K562 (cell line): ENCODE measurements at regions of chr4 and their contacts with region 1.

Region 1: GRCh38 chr4:173505924-173506518 is 24.0 kb downstream of the HAND2 start:
- DNase-seq: peak; percentile 44 to 78 (median 58)
- ATAC-seq: peak; percentile 98
- H3K4me3 ChIP-seq: no peak overlapping the region
- H3K27ac ChIP-seq: no peak overlapping the region
- H3K4me1 ChIP-seq: peaks cover 0 to 11% of the 10 kb centered on the region in 2 experiments; a peak in 2 of 5 replicates
- H3K27me3 ChIP-seq: no peaks in the 10 kb centered on the region; a peak in 1 of 5 replicates
- CTCF ChIP-seq: peak; percentile 77 to 83 (median 82)
- EP300 ChIP-seq: no peak
- POLR2A ChIP-seq: no peak
- RAD21 ChIP-seq: peak; percentile 70 to 79

Region 2: GRCh38 chr4:173218411-173219125 is 287.5 kb before region 1 on chr4:
- CTCF ChIA-PET with region 1: no interaction called
- POLR2A ChIA-PET with region 1: no interaction called
- in situ Hi-C with region 1: no loop called
- intact Hi-C with region 1: no loop called
- DNase-seq: peak; percentile 59 to 88 (median 69)
- ATAC-seq: peak; percentile 88
- H3K4me3 ChIP-seq: peak overlapping the region; percentile 7; the same call in 1 of the 2 replicates
- H3K27ac ChIP-seq: peak overlapping the region; percentile 84
- H3K4me1 ChIP-seq: peaks cover 11 to 40% of the 10 kb centered on the region in 2 experiments
- H3K27me3 ChIP-seq: no peaks in the 10 kb centered on the region
- CTCF ChIP-seq: no peak; a peak in 1 of 6 replicates
- EP300 ChIP-seq: peak; percentile 92
- POLR2A ChIP-seq: no peak
- RAD21 ChIP-seq: no peak

Region 3: DNA sequence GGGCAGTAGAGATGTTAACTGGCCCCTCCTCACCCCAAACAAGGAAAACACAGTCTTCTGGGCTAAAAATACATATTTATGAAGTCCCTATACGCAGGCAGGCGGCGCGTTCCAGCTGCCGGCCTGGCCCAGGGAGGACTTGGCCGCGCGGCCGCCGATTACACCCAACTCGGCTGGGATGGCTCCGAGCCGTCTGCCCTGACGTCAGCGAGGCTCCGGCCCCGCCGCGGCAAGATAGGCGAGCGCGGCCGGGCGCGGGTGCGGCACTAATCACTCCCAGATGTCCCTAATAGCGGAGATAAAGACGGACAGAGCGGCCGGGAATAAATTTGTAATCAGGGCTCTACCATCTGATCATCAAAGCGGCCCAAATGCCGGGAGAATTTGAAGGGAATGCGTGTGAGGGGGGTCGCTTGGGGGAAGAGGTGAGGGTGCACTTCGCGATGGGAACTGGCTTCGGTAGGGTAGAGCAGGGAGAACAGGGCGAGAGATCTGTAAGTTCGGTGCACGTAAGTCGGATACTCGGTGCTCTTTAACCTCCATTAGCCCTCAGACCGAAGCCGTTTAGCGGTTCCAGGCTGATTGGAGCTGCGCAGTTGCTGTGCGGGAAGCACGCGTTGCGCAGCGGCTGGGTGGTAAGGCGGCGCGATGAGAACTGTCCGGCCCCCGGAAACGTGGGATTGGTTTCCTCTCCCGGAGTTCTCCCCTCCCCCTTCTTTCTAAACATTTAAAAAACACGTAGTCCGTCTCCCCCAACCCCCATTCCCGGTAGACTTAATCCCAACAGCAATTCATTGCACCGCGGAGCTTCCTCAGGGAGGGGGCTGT is 16.3 kb after region 1 on chr4:
- CTCF ChIA-PET with region 1: no interaction called
- POLR2A ChIA-PET with region 1: no interaction called
- in situ Hi-C with region 1: no loop called
- intact Hi-C with region 1: no loop called
- DNase-seq: peak; percentile 45 to 71 (median 58)
- ATAC-seq: peak; percentile 75
- H3K4me3 ChIP-seq: peak overlapping the region; percentile 21
- H3K27ac ChIP-seq: peak overlapping the region; percentile 76
- H3K4me1 ChIP-seq: peaks cover 0 to 34% of the 10 kb centered on the region in 2 experiments; a peak in 4 of 5 replicates
- H3K27me3 ChIP-seq: no peaks in the 10 kb centered on the region; a peak in 1 of 5 replicates
- CTCF ChIP-seq: no peak
- EP300 ChIP-seq: no peak
- POLR2A ChIP-seq: peak; percentile 32; the same call in 1 of the 2 replicates
- RAD21 ChIP-seq: no peak

Region 4: DNA sequence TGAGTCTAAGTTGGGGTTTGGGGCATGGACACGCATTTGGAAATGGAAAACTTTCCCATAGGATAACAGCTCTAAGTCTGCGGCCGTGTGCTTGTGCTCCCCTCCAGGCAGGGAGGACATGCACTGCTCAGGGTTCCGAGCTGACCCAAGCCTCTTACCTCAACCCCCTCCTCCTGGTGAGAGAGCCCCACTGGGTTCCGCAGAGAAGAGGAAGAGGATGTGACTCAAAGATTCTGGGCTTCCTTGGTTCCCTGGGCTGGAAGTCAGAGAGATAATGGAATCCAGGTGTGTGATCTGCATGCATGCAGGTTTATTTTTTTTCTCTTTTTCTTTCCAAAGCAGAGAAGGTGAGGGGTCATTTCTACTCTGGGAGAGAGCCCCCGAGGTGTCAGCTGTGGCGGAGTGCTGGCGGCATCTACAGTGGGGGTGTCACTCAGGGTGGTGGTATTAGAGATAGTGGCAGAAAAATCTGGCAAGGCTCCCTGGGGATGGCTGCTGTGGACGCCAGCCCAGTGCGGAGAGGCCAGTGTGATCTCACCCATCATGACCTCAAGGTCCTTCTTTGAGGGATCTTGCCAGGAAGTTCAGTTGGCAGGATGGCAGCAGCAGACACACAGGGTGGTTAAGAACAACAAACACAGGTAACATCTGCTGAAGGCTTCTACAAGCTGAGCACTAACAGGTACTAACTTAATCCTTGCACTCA is 192.7 kb after region 1 on chr4:
- CTCF ChIA-PET with region 1: no interaction called
- POLR2A ChIA-PET with region 1: no interaction called
- in situ Hi-C with region 1: no loop called
- intact Hi-C with region 1: no loop called
- DNase-seq: no peak
- ATAC-seq: no peak
- H3K4me3 ChIP-seq: no peak overlapping the region
- H3K27ac ChIP-seq: no peak overlapping the region
- H3K4me1 ChIP-seq: no peaks in the 10 kb centered on the region; a peak in 1 of 5 replicates
- H3K27me3 ChIP-seq: no peaks in the 10 kb centered on the region
- CTCF ChIP-seq: no peak
- EP300 ChIP-seq: no peak
- POLR2A ChIP-seq: no peak
- RAD21 ChIP-seq: no peak

Region 5: DNA sequence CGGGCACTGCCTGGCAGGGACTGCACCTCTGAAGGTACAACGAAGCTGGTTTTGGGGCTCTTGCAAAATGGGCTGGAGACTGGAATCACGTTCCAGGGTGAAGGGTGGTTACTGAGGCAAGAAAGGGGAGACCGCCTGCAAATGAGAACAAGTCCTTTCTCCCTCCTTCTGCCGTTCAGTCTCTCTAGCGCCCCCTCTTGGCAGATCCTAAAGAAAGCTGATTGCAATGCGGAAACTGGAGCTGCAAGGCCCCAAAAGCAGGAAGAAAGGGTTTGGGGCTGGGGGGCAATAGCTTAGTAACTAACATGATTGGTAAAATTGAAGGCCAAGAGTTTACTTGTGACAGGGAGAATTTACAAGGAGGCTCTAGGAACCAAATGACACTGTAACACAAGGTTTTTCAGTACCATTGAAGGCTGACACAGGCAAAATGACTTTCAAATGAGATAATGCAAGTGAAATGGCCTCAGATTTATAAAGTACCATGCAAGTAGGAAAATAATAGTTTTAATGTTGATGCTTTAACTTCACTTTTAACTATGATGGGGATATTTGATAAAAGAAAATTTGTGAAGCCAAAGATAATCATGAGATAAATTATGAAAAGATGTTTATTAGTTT is 246.7 kb after region 1 on chr4:
- CTCF ChIA-PET with region 1: interaction called, 5 read pairs
- POLR2A ChIA-PET with region 1: no interaction called
- in situ Hi-C with region 1: no loop called
- intact Hi-C with region 1: loop called (anchors 1 kb)
- DNase-seq: peak; percentile 40 to 74 (median 57)
- ATAC-seq: peak; percentile 84
- H3K4me3 ChIP-seq: no peak overlapping the region
- H3K27ac ChIP-seq: no peak overlapping the region
- H3K4me1 ChIP-seq: no peaks in the 10 kb centered on the region
- H3K27me3 ChIP-seq: no peaks in the 10 kb centered on the region
- CTCF ChIP-seq: peak; percentile 66 to 78 (median 72)
- EP300 ChIP-seq: no peak
- POLR2A ChIP-seq: no peak
- RAD21 ChIP-seq: peak in 1 of 2 experiments; percentile 44; a peak in 2 of 4 replicates

Region 6: GRCh38 chr4:173827707-173828106 is 321.7 kb after region 1 on chr4:
- CTCF ChIA-PET with region 1: no interaction called
- POLR2A ChIA-PET with region 1: no interaction called
- in situ Hi-C with region 1: no loop called
- intact Hi-C with region 1: loop called (anchors 10 kb)
- DNase-seq: no peak
- ATAC-seq: no peak
- H3K4me3 ChIP-seq: no peak overlapping the region
- H3K27ac ChIP-seq: no peak overlapping the region
- H3K4me1 ChIP-seq: no peaks in the 10 kb centered on the region
- H3K27me3 ChIP-seq: no peaks in the 10 kb centered on the region
- CTCF ChIP-seq: no peak
- EP300 ChIP-seq: no peak
- POLR2A ChIP-seq: no peak
- RAD21 ChIP-seq: no peak

Region 7: DNA sequence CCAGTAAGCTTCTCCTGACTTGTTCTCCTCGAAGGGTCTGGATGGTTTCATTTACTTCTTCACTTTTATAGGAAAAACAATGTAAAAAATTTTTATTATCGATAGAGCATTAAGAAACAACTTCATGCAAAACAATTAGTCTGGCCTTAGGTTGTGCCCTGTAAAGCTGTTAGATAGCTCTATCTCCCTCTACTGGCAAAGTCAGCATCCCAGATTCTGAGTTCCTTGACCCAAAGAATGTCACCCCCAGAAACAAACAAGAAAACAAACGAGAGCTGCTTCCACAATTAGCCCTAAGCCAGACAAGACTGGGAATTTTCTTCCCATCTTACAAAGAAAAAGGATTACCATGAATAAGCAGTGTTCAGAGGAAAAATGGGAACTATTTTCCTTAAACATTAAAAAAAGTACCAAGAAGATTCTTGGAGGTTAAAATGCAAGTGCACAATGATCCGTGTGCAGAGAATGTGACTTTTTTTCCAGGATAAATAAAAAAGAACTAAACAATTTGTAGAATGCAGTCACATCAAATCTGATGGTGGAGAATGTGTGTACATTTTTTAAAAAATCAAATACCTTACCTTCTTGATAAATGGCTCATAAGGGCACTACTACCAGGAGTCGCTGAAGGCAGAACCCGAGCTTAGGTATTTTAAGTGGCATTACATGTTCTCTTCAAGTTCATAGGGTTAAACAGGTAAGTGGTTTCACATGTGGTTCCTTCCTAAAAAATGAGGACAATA is 484.3 kb after region 1 on chr4:
- CTCF ChIA-PET with region 1: no interaction called
- POLR2A ChIA-PET with region 1: no interaction called
- in situ Hi-C with region 1: loop called (anchors 25 kb)
- intact Hi-C with region 1: loop called (anchors 1 kb)
- DNase-seq: peak in 2 of 4 experiments; percentile 15 to 41
- ATAC-seq: peak; percentile 88
- H3K4me3 ChIP-seq: no peak overlapping the region
- H3K27ac ChIP-seq: no peak overlapping the region
- H3K4me1 ChIP-seq: peaks cover 0 to 3% of the 10 kb centered on the region in 2 experiments; a peak in 2 of 5 replicates
- H3K27me3 ChIP-seq: no peaks in the 10 kb centered on the region
- CTCF ChIP-seq: peak; percentile 38 to 54 (median 50); a peak in 5 of 6 replicates
- EP300 ChIP-seq: no peak
- POLR2A ChIP-seq: no peak
- RAD21 ChIP-seq: peak; percentile 43 to 44; a peak in 3 of 4 replicates